Heart right ventricle (tissue), 16 donors: ENCODE measurements at regions of chr4 and their contacts with region 1.

Region 1: GRCh38 chr4:163332500-163333406 is at the start of gene NPY1R:
- DNase-seq: peak; percentile 49 to 55
- ATAC-seq: peak; percentile 86 to 94 (median 90)
- H3K4me3 ChIP-seq: peak within 1 kb of the TSS; percentile 28 to 63 (median 51)
- H3K27ac ChIP-seq: no peak within 1 kb of the TSS
- H3K4me1 ChIP-seq: peaks cover 0 to 15% (median 4%) of the 10 kb centered on the region in 9 donors
- H3K27me3 ChIP-seq: peaks cover 0 to 69% (median 37%) of the 10 kb centered on the region in 7 donors
- CTCF ChIP-seq: peak; percentile 32 to 73 (median 57)
- total RNA-seq, gene NPY1R: 0.52 to 1.3 (median 0.92) TPM

Region 2: GRCh38 chr4:162497564-162498167 is 835.1 kb before region 1 on chr4:
- intact Hi-C with region 1: loop called in 8 of 10 experiments (anchors 2 to 10 kb)
- DNase-seq: no peak
- ATAC-seq: peak; percentile 52 to 88 (median 76)
- H3K4me3 ChIP-seq: peak overlapping the region in 5 of 10 donors; percentile 12 to 32 (median 26)
- H3K27ac ChIP-seq: peak overlapping the region in 1 of 10 donors; percentile 12
- H3K4me1 ChIP-seq: peaks cover 0 to 5% (median 0%) of the 10 kb centered on the region in 9 donors
- H3K27me3 ChIP-seq: no peaks in the 10 kb centered on the region
- CTCF ChIP-seq: peak; percentile 68 to 92 (median 81)

Region 3: DNA sequence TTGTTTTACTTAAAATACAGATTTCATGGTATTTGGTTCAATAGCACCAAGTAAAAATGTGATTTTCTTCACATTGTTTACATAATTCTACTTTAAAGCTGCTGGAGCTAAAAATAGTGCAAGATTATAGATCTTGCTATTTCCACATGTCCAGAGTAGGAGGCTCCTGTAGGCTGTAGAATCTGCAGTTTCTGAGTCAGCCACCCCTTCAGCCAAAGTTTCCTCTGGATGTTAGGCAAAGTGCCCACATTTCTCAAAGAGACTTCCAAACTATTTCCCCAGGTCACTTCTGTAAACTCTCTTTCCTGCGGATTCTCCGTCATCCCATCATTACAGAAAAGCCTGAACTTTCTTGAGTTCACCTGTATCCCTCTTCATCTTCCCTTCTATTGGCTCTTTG is 826.5 kb before region 1 on chr4:
- intact Hi-C with region 1: loop called in 1 of 10 experiments (anchors 10 kb)
- DNase-seq: no peak
- ATAC-seq: no peak
- H3K4me3 ChIP-seq: no peak overlapping the region
- H3K27ac ChIP-seq: no peak overlapping the region
- H3K4me1 ChIP-seq: no peaks in the 10 kb centered on the region
- H3K27me3 ChIP-seq: no peaks in the 10 kb centered on the region
- CTCF ChIP-seq: no peak

Region 4: GRCh38 chr4:162645381-162645780 is 687.4 kb before region 1 on chr4:
- intact Hi-C with region 1: loop called in 3 of 10 experiments (anchors 10 kb)
- DNase-seq: no peak
- ATAC-seq: no peak
- H3K4me3 ChIP-seq: no peak overlapping the region
- H3K27ac ChIP-seq: no peak overlapping the region
- H3K4me1 ChIP-seq: no peaks in the 10 kb centered on the region
- H3K27me3 ChIP-seq: no peaks in the 10 kb centered on the region
- CTCF ChIP-seq: peak in 7 of 9 donors; percentile 33 to 65 (median 53)

Region 5: DNA sequence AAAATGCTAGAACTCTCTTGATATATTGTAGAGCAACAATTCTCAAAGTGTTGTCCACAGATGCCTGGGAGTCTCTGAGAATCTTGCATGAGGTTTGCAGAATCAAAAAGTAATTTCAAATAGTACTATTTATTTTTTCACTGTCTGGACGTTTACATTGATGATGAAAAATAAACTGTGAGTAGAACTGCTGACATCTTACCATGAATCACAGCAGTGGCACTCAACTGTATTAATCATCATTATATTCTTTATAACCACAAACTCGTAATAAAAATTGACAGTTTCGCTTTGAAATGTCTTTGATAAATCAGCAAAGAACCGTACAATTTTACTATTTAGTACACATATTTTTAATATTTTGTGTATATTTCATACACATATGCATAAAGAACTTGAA is 260.5 kb before region 1 on chr4:
- intact Hi-C with region 1: no loop called
- DNase-seq: no peak
- ATAC-seq: no peak
- H3K4me3 ChIP-seq: no peak overlapping the region
- H3K27ac ChIP-seq: no peak overlapping the region
- H3K4me1 ChIP-seq: peaks cover 0 to 4% (median 0%) of the 10 kb centered on the region in 9 donors
- H3K27me3 ChIP-seq: no peaks in the 10 kb centered on the region
- CTCF ChIP-seq: no peak

Region 6: DNA sequence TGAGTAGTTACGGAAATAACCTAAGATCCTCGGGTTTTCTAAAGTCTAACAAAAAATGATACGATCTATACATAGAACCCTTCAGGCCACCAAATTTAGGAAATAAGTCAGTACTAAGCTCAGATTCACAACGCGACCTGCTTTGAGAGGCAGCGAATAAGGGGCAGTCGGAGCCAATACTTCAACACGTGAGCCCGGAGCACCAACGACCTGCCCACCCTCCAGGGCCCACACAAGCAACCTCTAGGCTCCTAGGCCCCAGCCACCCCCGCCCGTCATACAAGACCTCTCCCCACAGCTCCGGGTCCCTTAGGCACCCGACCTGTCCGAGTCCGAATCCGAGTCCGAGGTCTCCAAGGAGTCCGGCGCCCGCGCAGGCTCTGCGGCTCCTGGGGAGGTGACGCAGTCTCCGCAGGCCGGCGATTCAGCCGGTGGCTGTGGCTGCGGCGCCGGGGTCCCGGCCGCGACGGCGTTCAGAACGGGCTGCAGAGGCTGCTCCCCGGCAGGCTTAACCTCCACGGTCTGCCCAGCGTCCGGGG is 166.6 kb before region 1 on chr4:
- intact Hi-C with region 1: loop called in 1 of 10 experiments (anchors 10 kb)
- DNase-seq: peak; percentile 26 to 48
- ATAC-seq: peak; percentile 62 to 90 (median 74)
- H3K4me3 ChIP-seq: peak overlapping the region; percentile 77 to 93 (median 89)
- H3K27ac ChIP-seq: peak overlapping the region; percentile 33 to 92 (median 89)
- H3K4me1 ChIP-seq: peaks cover 2 to 28% (median 24%) of the 10 kb centered on the region in 9 donors
- H3K27me3 ChIP-seq: no peaks in the 10 kb centered on the region
- CTCF ChIP-seq: no peak

Region 7: DNA sequence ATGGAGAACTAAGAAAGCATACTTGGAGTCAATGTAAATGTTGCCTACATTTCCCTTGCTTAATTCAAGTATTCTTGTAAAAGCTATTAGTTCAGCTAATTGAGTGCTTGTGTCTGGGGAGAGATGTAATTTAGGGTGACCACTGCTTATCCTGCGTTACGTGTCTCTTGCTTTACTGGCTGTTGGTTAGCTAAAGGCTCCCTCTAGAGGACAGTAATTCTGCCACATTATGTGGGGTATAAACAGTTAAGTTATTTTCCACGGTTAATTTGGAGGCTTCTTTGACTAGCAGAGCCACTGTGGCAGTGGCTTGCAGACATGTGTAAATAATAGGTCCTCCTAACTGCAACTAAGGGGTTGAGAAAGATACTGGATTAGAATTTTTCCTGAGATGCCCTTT is 140.8 kb before region 1 on chr4:
- intact Hi-C with region 1: no loop called
- DNase-seq: no peak
- ATAC-seq: no peak
- H3K4me3 ChIP-seq: no peak overlapping the region
- H3K27ac ChIP-seq: no peak overlapping the region
- H3K4me1 ChIP-seq: no peaks in the 10 kb centered on the region
- H3K27me3 ChIP-seq: peaks cover 0 to 3% (median 0%) of the 10 kb centered on the region in 7 donors
- CTCF ChIP-seq: peak in 3 of 9 donors; percentile 3 to 18 (median 6)

Region 8: GRCh38 chr4:163544407-163545038 is 211.8 kb after region 1 on chr4:
- intact Hi-C with region 1: loop called in 1 of 10 experiments (anchors 10 kb)
- DNase-seq: peak; percentile 28 to 48
- ATAC-seq: peak in 7 of 8 donors; percentile 76 to 85 (median 79)
- H3K4me3 ChIP-seq: peak overlapping the region in 6 of 10 donors; percentile 26 to 39 (median 35)
- H3K27ac ChIP-seq: no peak overlapping the region
- H3K4me1 ChIP-seq: peaks cover 0 to 11% (median 0%) of the 10 kb centered on the region in 9 donors
- H3K27me3 ChIP-seq: no peaks in the 10 kb centered on the region
- CTCF ChIP-seq: peak; percentile 79 to 97 (median 92)